PC-3 (cell line): ENCODE measurements at regions of chr7 and their contacts with region 1.

Region 1: GRCh38 chr7:113015032-113015645 is 71.5 kb downstream of the GPR85 start:
- DNase-seq: peak; percentile 50
- ATAC-seq: 0 out of 2 replicates have a peak, but pooled peaks have one; percentile 33
- H3K4me3 ChIP-seq: no peak overlapping the region
- H3K27ac ChIP-seq: no peak overlapping the region
- H3K4me1 ChIP-seq: no peaks in the 10 kb centered on the region
- H3K27me3 ChIP-seq: no peaks in the 10 kb centered on the region
- CTCF ChIP-seq: peak; percentile 64

Region 2: GRCh38 chr7:113159746-113160339 is 144.7 kb after region 1 on chr7:
- CTCF ChIA-PET with region 1: no interaction called
- POLR2A ChIA-PET with region 1: no interaction called
- intact Hi-C with region 1: loop called (anchors 1 kb)
- DNase-seq: peak; percentile 38
- ATAC-seq: peak; percentile 57; the same call in 1 of the 2 replicates
- H3K4me3 ChIP-seq: no peak overlapping the region
- H3K27ac ChIP-seq: no peak overlapping the region
- H3K4me1 ChIP-seq: no peaks in the 10 kb centered on the region
- H3K27me3 ChIP-seq: no peaks in the 10 kb centered on the region
- CTCF ChIP-seq: peak; percentile 69

Region 3: GRCh38 chr7:113698556-113699220 is 683.5 kb after region 1 on chr7:
- CTCF ChIA-PET with region 1: no interaction called
- POLR2A ChIA-PET with region 1: no interaction called
- intact Hi-C with region 1: loop called (anchors 2 kb)
- DNase-seq: peak; percentile 56
- ATAC-seq: no peak
- H3K4me3 ChIP-seq: no peak overlapping the region
- H3K27ac ChIP-seq: no peak overlapping the region
- H3K4me1 ChIP-seq: no peaks in the 10 kb centered on the region
- H3K27me3 ChIP-seq: no peaks in the 10 kb centered on the region
- CTCF ChIP-seq: peak; percentile 76